H1 (cell line): ENCODE measurements at regions of chr1 and their contacts with region 1.

Region 1: GRCh38 chr1:243713470-243714186 is 136.4 kb downstream of the AKT3 start:
- DNase-seq: no peak
- H3K4me3 ChIP-seq: no peak overlapping the region
- H3K27ac ChIP-seq: no peak overlapping the region
- H3K4me1 ChIP-seq: peaks cover 0 to 8% (median 5%) of the 10 kb centered on the region in 4 experiments; a peak in 2 of 7 replicates
- H3K27me3 ChIP-seq: no peaks in the 10 kb centered on the region
- CTCF ChIP-seq: no peak
- EP300 ChIP-seq: no peak
- POLR2A ChIP-seq: no peak
- RAD21 ChIP-seq: no peak

Region 2: GRCh38 chr1:243731301-243731891 is 17.8 kb after region 1 on chr1:
- CTCF ChIA-PET with region 1: interaction called, 14 read pairs
- POLR2A ChIA-PET with region 1: no interaction called
- DNase-seq: no peak
- H3K4me3 ChIP-seq: no peak overlapping the region
- H3K27ac ChIP-seq: no peak overlapping the region
- H3K4me1 ChIP-seq: peaks cover 0 to 11% (median 10%) of the 10 kb centered on the region in 4 experiments; a peak in 5 of 7 replicates
- H3K27me3 ChIP-seq: no peaks in the 10 kb centered on the region
- CTCF ChIP-seq: no peak
- EP300 ChIP-seq: no peak
- POLR2A ChIP-seq: no peak
- RAD21 ChIP-seq: no peak

Region 3: DNA sequence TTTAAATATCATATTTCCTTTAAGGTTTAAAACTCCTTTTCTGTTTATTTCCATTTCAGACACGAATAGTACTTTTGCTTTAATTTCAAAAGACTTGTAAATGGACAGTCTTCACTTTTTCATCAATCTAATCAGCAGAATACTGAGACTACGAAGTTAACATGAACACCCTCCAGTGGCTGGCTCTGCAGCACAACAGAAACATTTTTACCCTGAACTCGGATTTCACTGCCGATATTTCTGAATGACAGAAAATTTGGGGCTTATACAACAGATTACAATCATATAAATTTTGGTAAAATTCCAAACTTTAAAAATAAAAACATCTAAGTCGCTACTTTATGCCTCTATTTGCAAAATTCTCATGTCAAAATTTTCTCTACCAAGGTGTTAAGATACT is 50.2 kb after region 1 on chr1:
- CTCF ChIA-PET with region 1: no interaction called
- POLR2A ChIA-PET with region 1: no interaction called
- DNase-seq: no peak
- H3K4me3 ChIP-seq: no peak overlapping the region
- H3K27ac ChIP-seq: no peak overlapping the region
- H3K4me1 ChIP-seq: no peaks in the 10 kb centered on the region
- H3K27me3 ChIP-seq: no peaks in the 10 kb centered on the region
- CTCF ChIP-seq: no peak
- EP300 ChIP-seq: no peak
- POLR2A ChIP-seq: no peak
- RAD21 ChIP-seq: no peak